ENCODE measurements at regions of chr19 and their contacts with region 1.

Region 1: GRCh38 chr19:48391107-48391986 is at the start of gene KDELR1:
- DNase-seq: peak; percentile 82
- H3K4me3 ChIP-seq: peak within 1 kb of the TSS; percentile 98
- H3K27ac ChIP-seq: peak within 1 kb of the TSS; percentile 89
- H3K4me1 ChIP-seq: no peaks in the 10 kb centered on the region
- H3K27me3 ChIP-seq: peaks cover 40% of the 10 kb centered on the region
- CTCF ChIP-seq: peak; percentile 83
- total RNA-seq, gene KDELR1: 233 to 249 TPM

Region 2: GRCh38 chr19:48310227-48310626 is 81.1 kb before region 1 on chr19:
- intact Hi-C with region 1: loop called (anchors 10 kb)
- DNase-seq: no peak
- H3K4me3 ChIP-seq: no peak overlapping the region
- H3K27ac ChIP-seq: no peak overlapping the region
- H3K4me1 ChIP-seq: no peaks in the 10 kb centered on the region
- H3K27me3 ChIP-seq: no peaks in the 10 kb centered on the region
- CTCF ChIP-seq: no peak

Region 3: GRCh38 chr19:48351341-48351752 is 40.0 kb before region 1 on chr19:
- intact Hi-C with region 1: loop called (anchors 5 kb)
- DNase-seq: peak; percentile 87
- H3K4me3 ChIP-seq: no peak overlapping the region
- H3K27ac ChIP-seq: no peak overlapping the region
- H3K4me1 ChIP-seq: no peaks in the 10 kb centered on the region
- H3K27me3 ChIP-seq: no peaks in the 10 kb centered on the region
- CTCF ChIP-seq: peak; percentile 88

Measured in colonic mucosa (tissue), 4 donors.